Panc1 (cell line): ENCODE measurements at regions of chr17 and their contacts with region 1.

Region 1: DNA sequence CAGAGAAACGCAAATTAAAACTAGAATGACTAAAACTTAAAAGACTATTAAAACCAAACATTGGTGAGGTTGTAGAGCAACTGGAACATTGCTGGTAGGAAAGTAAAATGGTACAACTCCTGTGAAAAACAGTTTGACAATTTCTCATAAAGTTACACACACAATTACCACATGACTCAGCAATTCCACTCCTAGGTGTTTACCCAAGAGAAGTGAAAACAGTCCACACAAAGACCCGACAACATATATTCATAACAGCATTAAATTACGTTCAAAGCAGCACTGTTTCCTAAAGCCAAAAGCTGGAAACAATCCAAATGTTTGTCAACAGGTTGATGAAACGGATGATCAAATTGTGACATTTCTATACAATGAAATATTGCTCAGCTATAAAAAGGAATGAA is 26.5 kb upstream of the ALOX12 start:
- DNase-seq: no peak
- ATAC-seq: no peak
- H3K4me3 ChIP-seq: no peak overlapping the region
- H3K27ac ChIP-seq: no peak overlapping the region
- H3K4me1 ChIP-seq: no peaks in the 10 kb centered on the region
- H3K27me3 ChIP-seq: no peaks in the 10 kb centered on the region
- CTCF ChIP-seq: no peak

Region 2: GRCh38 chr17:6683081-6683684 is 286.1 kb before region 1 on chr17:
- CTCF ChIA-PET with region 1: interaction called, 10 read pairs
- POLR2A ChIA-PET with region 1: no interaction called
- in situ Hi-C with region 1: no loop called
- intact Hi-C with region 1: no loop called
- DNase-seq: no peak
- ATAC-seq: no peak
- H3K4me3 ChIP-seq: no peak overlapping the region
- H3K27ac ChIP-seq: no peak overlapping the region
- H3K4me1 ChIP-seq: no peaks in the 10 kb centered on the region
- H3K27me3 ChIP-seq: peaks cover 7% of the 10 kb centered on the region
- CTCF ChIP-seq: no peak

Region 3: DNA sequence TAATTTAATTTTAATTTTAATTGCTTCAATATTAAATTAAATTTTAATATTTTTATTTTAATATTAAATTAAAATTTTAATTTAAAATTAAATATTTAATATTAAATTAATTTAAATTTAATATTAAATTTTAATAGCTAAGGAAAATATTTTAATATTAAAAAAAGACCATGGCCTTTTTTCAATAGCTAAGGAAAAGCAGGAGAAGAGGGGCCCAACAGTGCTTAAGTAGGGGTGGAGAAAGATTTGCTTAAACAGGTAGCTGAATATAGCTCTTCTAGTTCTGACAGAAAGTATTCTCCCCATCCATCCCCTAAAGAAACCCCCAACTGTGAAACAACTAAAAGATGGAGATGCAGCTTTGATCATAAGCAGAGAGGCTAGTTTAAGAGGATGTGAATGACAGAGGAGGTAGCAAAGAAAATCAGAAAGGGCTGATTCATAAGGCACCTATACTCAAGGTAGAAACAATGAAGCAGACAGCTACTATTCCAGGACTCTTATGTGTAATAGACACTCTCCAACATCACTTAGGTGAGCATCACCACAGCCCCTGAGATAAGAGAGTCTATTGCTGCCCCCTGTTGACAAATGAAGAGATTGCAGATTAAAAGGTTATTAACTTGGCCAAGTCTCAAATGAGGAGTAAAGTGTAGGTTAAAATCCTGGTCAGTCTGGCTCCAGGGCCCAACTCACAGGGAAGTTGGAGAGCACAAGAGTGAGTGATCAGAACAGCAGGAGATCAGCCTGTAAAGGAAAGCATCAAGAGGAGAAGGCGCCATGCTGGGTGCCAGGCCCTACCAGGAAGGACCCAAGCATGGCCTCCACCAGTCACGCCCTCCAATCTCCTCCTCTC is 35.3 kb after region 1 on chr17:
- CTCF ChIA-PET with region 1: interaction called, 3 read pairs
- POLR2A ChIA-PET with region 1: interaction called, 15 read pairs
- in situ Hi-C with region 1: no loop called
- intact Hi-C with region 1: no loop called
- DNase-seq: no peak
- ATAC-seq: peak; percentile 89
- H3K4me3 ChIP-seq: no peak overlapping the region
- H3K27ac ChIP-seq: no peak overlapping the region
- H3K4me1 ChIP-seq: no peaks in the 10 kb centered on the region
- H3K27me3 ChIP-seq: no peaks in the 10 kb centered on the region
- CTCF ChIP-seq: peak; percentile 77

Region 4: GRCh38 chr17:7173687-7174602 is 204.6 kb after region 1 on chr17:
- CTCF ChIA-PET with region 1: interaction called, 10 read pairs
- POLR2A ChIA-PET with region 1: no interaction called
- in situ Hi-C with region 1: no loop called
- intact Hi-C with region 1: no loop called
- DNase-seq: no peak
- ATAC-seq: no peak
- H3K4me3 ChIP-seq: no peak overlapping the region
- H3K27ac ChIP-seq: no peak overlapping the region
- H3K4me1 ChIP-seq: peaks cover 9% of the 10 kb centered on the region; the same call in 1 of the 2 replicates
- H3K27me3 ChIP-seq: no peaks in the 10 kb centered on the region
- CTCF ChIP-seq: no peak

Region 5: GRCh38 chr17:7296189-7296902 is 327.0 kb after region 1 on chr17:
- CTCF ChIA-PET with region 1: interaction called, 11 read pairs
- POLR2A ChIA-PET with region 1: no interaction called
- in situ Hi-C with region 1: no loop called
- intact Hi-C with region 1: no loop called
- DNase-seq: no peak
- ATAC-seq: peak; percentile 79
- H3K4me3 ChIP-seq: peak overlapping the region; percentile 3 to 31; a peak in 2 of 4 replicates
- H3K27ac ChIP-seq: peak overlapping the region; percentile 57; the same call in 1 of the 2 replicates
- H3K4me1 ChIP-seq: peaks cover 17% of the 10 kb centered on the region
- H3K27me3 ChIP-seq: no peaks in the 10 kb centered on the region
- CTCF ChIP-seq: peak; percentile 96